CD14-positive monocyte (primary cell): ENCODE measurements at regions of chr3 and their contacts with region 1.

Region 1: GRCh38 chr3:72847751-72848702 is at the start of gene SHQ1:
- DNase-seq: peak; percentile 94 to 97 (median 96)
- H3K4me3 ChIP-seq: peak within 1 kb of the TSS; percentile 86 to 96 (median 86)
- H3K4me3 Mint-ChIP-seq: peak within 1 kb of the TSS; percentile 94 to 100
- H3K27ac ChIP-seq: peak within 1 kb of the TSS; percentile 71
- H3K27ac Mint-ChIP-seq: peak within 1 kb of the TSS; percentile 58 to 94 (median 93)
- H3K4me1 ChIP-seq: peaks cover 21 to 25% of the 10 kb centered on the region in 2 donors
- H3K4me1 Mint-ChIP-seq: peaks cover 35% of the 10 kb centered on the region
- H3K27me3 ChIP-seq: no peaks in the 10 kb centered on the region
- H3K27me3 Mint-ChIP-seq: peaks cover 0 to 2% (median 0%) of the 10 kb centered on the region in 3 donors
- CTCF ChIP-seq: no peak
- polyA plus RNA-seq, gene SHQ1: 3.5 to 31.6 (median 8.2) TPM

Region 2: GRCh38 chr3:72996473-72997333 is 148.7 kb after region 1 on chr3 and contains the start of gene PPP4R2:
- intact Hi-C with region 1: loop called in 1 of 2 experiments (anchors 5 kb)
- DNase-seq: peak; percentile 87 to 93 (median 88)
- H3K4me3 ChIP-seq: peak within 1 kb of the TSS; percentile 82 to 98 (median 96)
- H3K4me3 Mint-ChIP-seq: peak within 1 kb of the TSS; percentile 83 to 89
- H3K27ac ChIP-seq: peak within 1 kb of the TSS; percentile 90 to 96
- H3K27ac Mint-ChIP-seq: peak within 1 kb of the TSS; percentile 82 to 96 (median 95)
- H3K4me1 ChIP-seq: peaks cover 25 to 40% of the 10 kb centered on the region in 2 donors
- H3K4me1 Mint-ChIP-seq: peaks cover 33% of the 10 kb centered on the region
- H3K27me3 ChIP-seq: no peaks in the 10 kb centered on the region
- H3K27me3 Mint-ChIP-seq: peaks cover 0 to 2% (median 0%) of the 10 kb centered on the region in 3 donors
- CTCF ChIP-seq: no peak
- polyA plus RNA-seq, gene PPP4R2: 14.3 to 25.4 (median 18.7) TPM

Region 3: DNA sequence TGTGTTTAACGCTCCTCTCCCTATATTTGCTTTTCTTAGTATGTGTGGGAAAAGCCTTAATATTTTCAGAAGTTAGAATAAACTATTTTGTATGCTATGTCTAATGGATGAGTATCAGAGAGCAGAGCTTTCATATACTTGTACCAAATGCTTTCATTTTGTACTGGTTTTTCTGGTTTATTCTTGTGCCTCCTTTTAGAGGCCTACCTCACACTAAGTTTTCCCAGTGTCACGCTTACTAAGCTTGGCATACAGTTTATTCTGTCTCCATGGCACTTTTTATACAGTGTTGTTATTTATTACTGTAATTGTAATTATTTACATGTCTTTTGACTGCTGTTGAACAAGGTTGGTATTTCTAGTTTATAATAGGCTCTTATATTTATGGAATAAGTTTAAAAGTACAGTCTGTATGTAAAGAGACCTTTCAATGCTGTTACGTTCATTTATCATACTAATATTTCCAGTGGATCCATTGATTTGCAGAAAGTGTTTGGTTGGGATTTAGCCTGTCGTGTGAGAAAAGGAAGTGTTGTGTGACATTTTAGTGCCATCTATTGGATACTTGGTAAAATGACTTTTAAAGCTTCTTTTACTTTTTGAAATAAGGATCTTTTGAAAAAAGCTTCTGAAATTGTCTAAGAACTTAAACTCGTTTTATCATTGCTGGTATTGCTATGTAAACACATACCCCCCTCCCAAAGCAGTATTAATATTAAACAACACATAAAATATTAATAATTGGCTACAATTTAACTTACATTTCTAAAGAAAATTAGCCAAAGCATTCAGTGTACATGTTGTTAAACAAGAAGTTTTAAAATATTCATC is 208.2 kb after region 1 on chr3:
- intact Hi-C with region 1: loop called in 1 of 2 experiments (anchors 10 kb)
- DNase-seq: peak; percentile 7 to 39 (median 13)
- H3K4me3 ChIP-seq: no peak overlapping the region
- H3K4me3 Mint-ChIP-seq: no peak overlapping the region
- H3K27ac ChIP-seq: peak overlapping the region in 1 of 2 donors; percentile 26
- H3K27ac Mint-ChIP-seq: peak overlapping the region in 2 of 7 donors; percentile 2 to 16
- H3K4me1 ChIP-seq: no peaks in the 10 kb centered on the region
- H3K4me1 Mint-ChIP-seq: peaks cover 2% of the 10 kb centered on the region
- H3K27me3 ChIP-seq: no peaks in the 10 kb centered on the region
- H3K27me3 Mint-ChIP-seq: no peaks in the 10 kb centered on the region
- CTCF ChIP-seq: peak; percentile 73